WTC11 (cell line): ENCODE measurements at regions of chr3 and their contacts with region 1.

Region 1: GRCh38 chr3:42443819-42444436 is 33.5 kb upstream of the LYZL4 start:
- DNase-seq: peak; percentile 96
- ATAC-seq: peak; percentile 91
- H3K4me3 Mint-ChIP-seq: no peak overlapping the region
- H3K27ac Mint-ChIP-seq: no peak overlapping the region
- H3K4me1 Mint-ChIP-seq: peaks cover 56% of the 10 kb centered on the region
- H3K27me3 Mint-ChIP-seq: no peaks in the 10 kb centered on the region
- CTCF ChIP-seq: peak; percentile 84

Region 2: DNA sequence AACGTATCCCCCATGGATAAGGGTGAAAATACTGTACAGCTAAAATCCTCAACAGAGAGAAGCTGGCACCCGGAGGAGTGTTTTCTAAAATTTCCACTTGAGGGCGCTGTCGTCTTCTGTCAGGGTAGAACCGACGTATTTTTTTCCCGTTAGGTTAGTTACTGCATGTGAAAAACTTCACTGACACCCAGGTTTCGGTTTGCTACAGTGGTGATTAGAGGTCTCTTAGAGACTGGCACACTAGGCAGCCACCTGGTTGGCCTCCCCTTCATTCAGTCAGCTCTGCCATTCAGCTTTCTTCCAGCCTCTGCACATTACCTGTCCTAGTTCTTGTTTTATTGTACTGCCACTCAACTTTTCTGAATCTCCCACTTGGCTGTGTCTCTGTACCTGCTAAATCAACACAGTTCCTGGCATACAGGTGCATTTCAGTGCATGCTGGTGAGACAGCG is 196.3 kb before region 1 on chr3:
- CTCF ChIA-PET with region 1: interaction called, 82 read pairs
- POLR2A ChIA-PET with region 1: no interaction called
- DNase-seq: peak; percentile 75
- ATAC-seq: peak; percentile 80
- H3K4me3 Mint-ChIP-seq: no peak overlapping the region
- H3K27ac Mint-ChIP-seq: no peak overlapping the region
- H3K4me1 Mint-ChIP-seq: no peaks in the 10 kb centered on the region
- H3K27me3 Mint-ChIP-seq: peaks cover 20% of the 10 kb centered on the region
- CTCF ChIP-seq: peak; percentile 68

Region 3: DNA sequence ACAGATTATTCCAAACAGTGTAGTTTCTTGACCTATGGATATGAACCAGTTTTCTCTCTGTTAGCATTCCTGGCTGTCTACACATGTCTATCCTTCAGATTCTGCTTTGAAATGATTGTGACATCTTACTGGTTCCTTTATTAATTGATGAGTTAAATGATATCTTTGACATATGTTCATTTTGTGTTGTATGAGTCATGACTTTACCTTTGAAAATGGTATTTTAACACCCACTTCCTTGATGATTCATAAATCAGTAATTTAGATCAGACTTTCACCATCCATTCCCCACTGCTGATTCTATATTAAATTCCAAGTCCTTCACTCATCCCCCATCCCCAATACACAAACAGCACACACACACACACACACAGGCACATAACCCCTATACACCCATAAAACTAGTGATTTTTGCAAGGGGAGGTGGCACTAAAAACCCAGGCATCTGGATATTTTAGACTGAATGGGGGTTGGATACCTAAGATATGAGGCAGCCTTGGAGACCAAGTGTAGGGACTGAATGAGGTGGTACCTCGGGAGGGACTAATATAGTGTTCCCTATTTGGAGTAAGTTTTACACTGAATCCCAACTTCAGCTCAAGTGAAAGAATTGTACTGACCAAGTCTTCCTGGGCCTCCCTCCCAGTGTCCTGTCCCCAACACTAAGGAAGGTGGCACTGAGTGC is 187.7 kb before region 1 on chr3:
- CTCF ChIA-PET with region 1: interaction called, 24 read pairs
- POLR2A ChIA-PET with region 1: no interaction called
- DNase-seq: no peak
- ATAC-seq: no peak
- H3K4me3 Mint-ChIP-seq: no peak overlapping the region
- H3K27ac Mint-ChIP-seq: no peak overlapping the region
- H3K4me1 Mint-ChIP-seq: 0 out of 2 replicates have a peak, but pooled peaks cover 2% of the 10 kb centered on the region
- H3K27me3 Mint-ChIP-seq: peaks cover 5% of the 10 kb centered on the region
- CTCF ChIP-seq: no peak

Region 4: GRCh38 chr3:42264399-42265058 is 179.4 kb before region 1 on chr3:
- CTCF ChIA-PET with region 1: interaction called, 24 read pairs
- POLR2A ChIA-PET with region 1: no interaction called
- DNase-seq: peak; percentile 70
- ATAC-seq: peak; percentile 63
- H3K4me3 Mint-ChIP-seq: peak overlapping the region; percentile 63
- H3K27ac Mint-ChIP-seq: no peak overlapping the region
- H3K4me1 Mint-ChIP-seq: peaks cover 18% of the 10 kb centered on the region
- H3K27me3 Mint-ChIP-seq: peaks cover 54% of the 10 kb centered on the region
- CTCF ChIP-seq: no peak

Region 5: GRCh38 chr3:42502429-42503250 is 58.7 kb after region 1 on chr3 and contains the start of gene VIPR1:
- CTCF ChIA-PET with region 1: interaction called, 25 read pairs
- POLR2A ChIA-PET with region 1: no interaction called
- DNase-seq: peak; percentile 95
- ATAC-seq: peak; percentile 92
- H3K4me3 Mint-ChIP-seq: peak within 1 kb of the TSS; percentile 88
- H3K27ac Mint-ChIP-seq: no peak within 1 kb of the TSS
- H3K4me1 Mint-ChIP-seq: peaks cover 41% of the 10 kb centered on the region
- H3K27me3 Mint-ChIP-seq: peaks cover 63% of the 10 kb centered on the region
- CTCF ChIP-seq: no peak
- total RNA-seq, gene VIPR1: 7.1 to 9.4 TPM (median 7.2 TPM) in 3 replicates